Activated B cell treated with CpG ODN at 0.5 μM for 24 hours (primary cell): ENCODE measurements at regions of chr14 and their contacts with region 1.

Region 1: GRCh38 chr14:54627540-54628363 is 60.8 kb downstream of the SAMD4A start:
- DNase-seq: no peak
- ATAC-seq: peak; percentile 69
- H3K4me3 Mint-ChIP-seq: peak overlapping the region; percentile 79
- H3K27ac Mint-ChIP-seq: peak overlapping the region; percentile 91
- H3K4me1 Mint-ChIP-seq: peaks cover 51% of the 10 kb centered on the region
- H3K27me3 Mint-ChIP-seq: no peaks in the 10 kb centered on the region
- CTCF ChIP-seq: no peak

Region 2: GRCh38 chr14:54253195-54253947 is 374.4 kb before region 1 on chr14:
- CTCF ChIA-PET with region 1: no interaction called
- POLR2A ChIA-PET with region 1: no interaction called
- intact Hi-C with region 1: no loop called
- DNase-seq: no peak
- ATAC-seq: no peak
- H3K4me3 Mint-ChIP-seq: no peak overlapping the region
- H3K27ac Mint-ChIP-seq: no peak overlapping the region
- H3K4me1 Mint-ChIP-seq: no peaks in the 10 kb centered on the region
- H3K27me3 Mint-ChIP-seq: peaks cover 7% of the 10 kb centered on the region
- CTCF ChIP-seq: no peak

Region 3: GRCh38 chr14:54396493-54397335 is 231.0 kb before region 1 on chr14 and contains the start of gene CDKN3:
- CTCF ChIA-PET with region 1: no interaction called
- POLR2A ChIA-PET with region 1: no interaction called
- intact Hi-C with region 1: loop called (anchors 1 kb)
- DNase-seq: peak; percentile 94
- ATAC-seq: peak; percentile 94
- H3K4me3 Mint-ChIP-seq: peak within 1 kb of the TSS; percentile 86
- H3K27ac Mint-ChIP-seq: peak within 1 kb of the TSS; percentile 82
- H3K4me1 Mint-ChIP-seq: peaks cover 23% of the 10 kb centered on the region
- H3K27me3 Mint-ChIP-seq: no peaks in the 10 kb centered on the region
- CTCF ChIP-seq: no peak
- total RNA-seq, gene CDKN3: 0.91 and 1.6 TPM in 2 replicates

Region 4: GRCh38 chr14:54593860-54594259 is 33.9 kb before region 1 on chr14:
- CTCF ChIA-PET with region 1: no interaction called
- POLR2A ChIA-PET with region 1: interaction called, 3 read pairs
- intact Hi-C with region 1: loop called (anchors 5 kb)
- DNase-seq: no peak
- ATAC-seq: no peak
- H3K4me3 Mint-ChIP-seq: no peak overlapping the region
- H3K27ac Mint-ChIP-seq: no peak overlapping the region
- H3K4me1 Mint-ChIP-seq: peaks cover 4% of the 10 kb centered on the region
- H3K27me3 Mint-ChIP-seq: no peaks in the 10 kb centered on the region
- CTCF ChIP-seq: no peak

Region 5: DNA sequence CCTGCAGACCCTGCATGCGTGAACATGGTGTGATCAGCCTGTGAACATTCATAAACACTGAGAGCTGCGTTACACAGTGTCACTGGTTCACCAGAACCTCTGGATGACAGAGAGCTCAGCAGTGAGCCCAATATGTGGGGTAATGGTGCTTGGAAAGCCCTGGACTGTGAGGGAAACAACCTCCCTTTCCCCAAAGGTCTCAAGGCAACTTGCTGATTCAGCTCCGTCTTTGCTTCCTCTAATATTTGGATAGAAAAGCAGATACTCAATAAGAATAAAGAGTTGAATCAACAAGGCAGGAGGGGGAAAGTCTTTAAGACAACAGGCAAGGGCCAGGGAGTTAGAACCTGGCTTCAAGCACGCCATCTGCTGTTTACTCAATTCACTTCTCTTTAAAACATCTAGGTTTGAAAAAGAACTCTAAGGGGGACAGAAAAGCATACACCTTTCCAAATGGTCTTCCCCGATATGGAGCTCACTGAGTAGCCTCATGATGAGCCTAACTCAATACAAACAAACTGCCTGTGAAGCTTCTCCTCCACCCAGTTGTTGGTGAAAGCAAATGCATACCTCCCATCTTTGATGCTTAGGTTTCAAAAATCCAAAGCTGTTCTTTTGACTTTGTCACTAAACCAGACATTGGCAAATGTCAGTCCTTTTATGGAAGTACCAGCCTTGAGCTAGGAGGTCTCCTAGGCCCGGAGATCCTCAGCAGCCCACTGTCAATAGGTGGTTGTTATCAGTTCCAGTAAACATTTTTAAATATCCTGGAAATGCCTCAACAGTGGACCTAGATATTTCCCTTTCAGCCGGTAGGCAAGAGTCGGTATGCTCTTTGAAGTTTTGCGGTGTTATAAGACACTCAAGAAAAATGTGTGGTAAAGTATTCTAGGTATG is 15.3 kb after region 1 on chr14:
- CTCF ChIA-PET with region 1: interaction called, 10 read pairs
- POLR2A ChIA-PET with region 1: no interaction called
- intact Hi-C with region 1: no loop called
- DNase-seq: no peak
- ATAC-seq: no peak
- H3K4me3 Mint-ChIP-seq: no peak overlapping the region
- H3K27ac Mint-ChIP-seq: no peak overlapping the region
- H3K4me1 Mint-ChIP-seq: no peaks in the 10 kb centered on the region
- H3K27me3 Mint-ChIP-seq: no peaks in the 10 kb centered on the region
- CTCF ChIP-seq: no peak

Region 6: GRCh38 chr14:54754623-54755386 is 127.1 kb after region 1 on chr14:
- CTCF ChIA-PET with region 1: no interaction called
- POLR2A ChIA-PET with region 1: no interaction called
- intact Hi-C with region 1: no loop called
- DNase-seq: no peak
- ATAC-seq: no peak
- H3K4me3 Mint-ChIP-seq: no peak overlapping the region
- H3K27ac Mint-ChIP-seq: no peak overlapping the region
- H3K4me1 Mint-ChIP-seq: no peaks in the 10 kb centered on the region
- H3K27me3 Mint-ChIP-seq: no peaks in the 10 kb centered on the region
- CTCF ChIP-seq: no peak

Region 7: GRCh38 chr14:54894995-54895394 is 267.2 kb after region 1 on chr14:
- CTCF ChIA-PET with region 1: no interaction called
- POLR2A ChIA-PET with region 1: no interaction called
- intact Hi-C with region 1: no loop called
- DNase-seq: no peak
- ATAC-seq: no peak
- H3K4me3 Mint-ChIP-seq: no peak overlapping the region
- H3K27ac Mint-ChIP-seq: peak overlapping the region; percentile 0
- H3K4me1 Mint-ChIP-seq: peaks cover 23% of the 10 kb centered on the region
- H3K27me3 Mint-ChIP-seq: no peaks in the 10 kb centered on the region
- CTCF ChIP-seq: no peak